A549 (cell line): ENCODE measurements at regions of chr1 and their contacts with region 1.

Region 1: GRCh38 chr1:145858894-145859490 is at the start of gene PIAS3:
- DNase-seq: peak; percentile 92 to 93
- ATAC-seq: peak; percentile 83 to 95
- H3K4me3 ChIP-seq: peak within 1 kb of the TSS; percentile 53
- H3K27ac ChIP-seq: peak within 1 kb of the TSS; percentile 92 to 99
- H3K4me1 ChIP-seq: peaks cover 10% of the 10 kb centered on the region; the same call in 2 of the 3 replicates
- CTCF ChIP-seq: no peak
- EP300 ChIP-seq: peak in 1 of 2 experiments; percentile 7; a peak in 1 of 5 replicates
- POLR2A ChIP-seq: peak; percentile 43
- RAD21 ChIP-seq: no peak
- polyA plus RNA-seq, gene PIAS3: 15.5 and 25.4 TPM in 2 replicates

Region 2: DNA sequence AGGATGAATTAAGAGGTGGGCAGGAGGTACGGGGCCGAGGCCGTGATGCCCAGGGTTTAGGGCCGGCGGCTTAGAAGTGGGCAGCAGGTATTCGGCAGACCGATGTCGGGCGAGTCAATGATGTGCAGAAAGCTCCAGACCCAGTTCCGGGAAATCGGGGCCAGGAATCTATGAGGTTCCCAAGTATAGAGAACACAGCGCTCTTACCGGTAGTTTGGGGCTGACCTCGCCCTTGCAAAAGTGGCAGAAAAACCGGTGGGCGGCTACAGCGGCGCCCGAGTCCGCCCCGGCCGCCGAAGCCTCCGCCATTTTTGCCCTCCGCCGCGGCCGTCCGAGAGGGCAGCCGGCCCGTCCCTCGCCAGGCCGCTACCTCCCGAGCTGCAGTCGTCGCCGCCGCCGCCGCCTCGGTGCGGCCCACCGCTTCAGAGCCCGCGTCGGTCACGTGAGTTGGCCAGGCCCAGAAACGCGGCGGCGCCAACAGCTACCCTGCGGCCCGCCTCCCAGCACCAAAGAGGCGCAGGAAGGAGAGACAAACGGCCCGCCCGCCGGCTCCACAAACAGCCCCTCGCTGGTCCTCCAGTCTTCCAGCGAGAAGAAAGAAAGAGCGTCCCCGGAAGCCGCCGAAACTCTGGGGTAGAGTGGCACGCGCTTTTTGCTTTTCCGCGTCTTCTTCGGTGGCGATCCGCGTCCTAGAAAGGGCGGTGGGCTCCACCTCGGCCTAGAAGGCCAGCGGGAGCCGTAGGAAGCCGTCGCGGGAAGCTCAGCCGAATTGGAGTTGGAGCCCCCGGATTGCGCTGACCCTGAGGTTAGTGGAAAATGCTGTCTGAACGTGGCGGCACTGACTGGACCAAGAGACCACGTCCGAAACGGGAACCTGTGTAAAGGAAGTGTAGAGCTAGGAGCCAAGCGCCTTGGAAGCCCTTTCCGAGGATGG is 35.2 kb before region 1 on chr1 and contains the starts of genes POLR3C and RNF115:
- CTCF ChIA-PET with region 1: no interaction called
- POLR2A ChIA-PET with region 1: interaction called, 12 read pairs
- DNase-seq: peak; percentile 83 to 93
- ATAC-seq: peak; percentile 96 to 97
- H3K4me3 ChIP-seq: peak within 1 kb of the TSS; percentile 75
- H3K27ac ChIP-seq: peak within 1 kb of the TSS; percentile 94 to 97
- H3K4me1 ChIP-seq: peaks cover 11% of the 10 kb centered on the region
- CTCF ChIP-seq: no peak
- EP300 ChIP-seq: no peak
- POLR2A ChIP-seq: peak; percentile 60
- RAD21 ChIP-seq: peak; percentile 5 to 17; a peak in 2 of 5 replicates
- polyA plus RNA-seq, gene POLR3C: 58.3 and 65.0 TPM in 2 replicates
- polyA plus RNA-seq, gene RNF115: 18.4 and 18.8 TPM in 2 replicates

Region 3: GRCh38 chr1:145906954-145907753 is 48.2 kb after region 1 on chr1:
- CTCF ChIA-PET with region 1: interaction called, 52 read pairs
- POLR2A ChIA-PET with region 1: interaction called, 4 read pairs
- DNase-seq: no peak
- ATAC-seq: no peak
- H3K4me3 ChIP-seq: no peak overlapping the region
- H3K27ac ChIP-seq: peak overlapping the region; percentile 39 to 42; a peak in 4 of 6 replicates
- H3K4me1 ChIP-seq: peaks cover 4% of the 10 kb centered on the region; the same call in 1 of the 3 replicates
- CTCF ChIP-seq: no peak
- EP300 ChIP-seq: no peak
- POLR2A ChIP-seq: no peak
- RAD21 ChIP-seq: no peak

Region 4: GRCh38 chr1:145927063-145927886 is 68.3 kb after region 1 on chr1 and contains the start of gene RBM8A:
- CTCF ChIA-PET with region 1: interaction called, 6 read pairs
- POLR2A ChIA-PET with region 1: interaction called, 22 read pairs
- DNase-seq: peak; percentile 86 to 99
- ATAC-seq: peak; percentile 98
- H3K4me3 ChIP-seq: peak within 1 kb of the TSS; percentile 84
- H3K27ac ChIP-seq: peak within 1 kb of the TSS; percentile 97
- H3K4me1 ChIP-seq: peaks cover 10% of the 10 kb centered on the region; the same call in 2 of the 3 replicates
- CTCF ChIP-seq: peak; percentile 60
- EP300 ChIP-seq: no peak
- POLR2A ChIP-seq: peak; percentile 92
- RAD21 ChIP-seq: peak; percentile 15 to 20; a peak in 1 of 5 replicates
- polyA plus RNA-seq, gene RBM8A: 152 and 281 TPM in 2 replicates

Region 5: GRCh38 chr1:145942405-145942804 is 83.4 kb after region 1 on chr1:
- CTCF ChIA-PET with region 1: no interaction called
- POLR2A ChIA-PET with region 1: no interaction called
- DNase-seq: no peak
- ATAC-seq: no peak
- H3K4me3 ChIP-seq: no peak overlapping the region
- H3K27ac ChIP-seq: no peak overlapping the region
- H3K4me1 ChIP-seq: no peaks in the 10 kb centered on the region
- CTCF ChIP-seq: no peak
- EP300 ChIP-seq: no peak
- POLR2A ChIP-seq: no peak
- RAD21 ChIP-seq: no peak

Region 6: GRCh38 chr1:145957443-145958319 is 98.7 kb after region 1 on chr1 and contains the start of gene LIX1L:
- CTCF ChIA-PET with region 1: interaction called, 3 read pairs
- POLR2A ChIA-PET with region 1: interaction called, 15 read pairs
- DNase-seq: peak; percentile 95 to 97
- ATAC-seq: peak; percentile 82 to 89
- H3K4me3 ChIP-seq: peak within 1 kb of the TSS; percentile 68
- H3K27ac ChIP-seq: peak within 1 kb of the TSS; percentile 91 to 97
- H3K4me1 ChIP-seq: peaks cover 42% of the 10 kb centered on the region
- CTCF ChIP-seq: no peak
- EP300 ChIP-seq: no peak
- POLR2A ChIP-seq: peak; percentile 66
- RAD21 ChIP-seq: no peak
- polyA plus RNA-seq, gene LIX1L: 33.0 and 35.8 TPM in 2 replicates

Region 7: DNA sequence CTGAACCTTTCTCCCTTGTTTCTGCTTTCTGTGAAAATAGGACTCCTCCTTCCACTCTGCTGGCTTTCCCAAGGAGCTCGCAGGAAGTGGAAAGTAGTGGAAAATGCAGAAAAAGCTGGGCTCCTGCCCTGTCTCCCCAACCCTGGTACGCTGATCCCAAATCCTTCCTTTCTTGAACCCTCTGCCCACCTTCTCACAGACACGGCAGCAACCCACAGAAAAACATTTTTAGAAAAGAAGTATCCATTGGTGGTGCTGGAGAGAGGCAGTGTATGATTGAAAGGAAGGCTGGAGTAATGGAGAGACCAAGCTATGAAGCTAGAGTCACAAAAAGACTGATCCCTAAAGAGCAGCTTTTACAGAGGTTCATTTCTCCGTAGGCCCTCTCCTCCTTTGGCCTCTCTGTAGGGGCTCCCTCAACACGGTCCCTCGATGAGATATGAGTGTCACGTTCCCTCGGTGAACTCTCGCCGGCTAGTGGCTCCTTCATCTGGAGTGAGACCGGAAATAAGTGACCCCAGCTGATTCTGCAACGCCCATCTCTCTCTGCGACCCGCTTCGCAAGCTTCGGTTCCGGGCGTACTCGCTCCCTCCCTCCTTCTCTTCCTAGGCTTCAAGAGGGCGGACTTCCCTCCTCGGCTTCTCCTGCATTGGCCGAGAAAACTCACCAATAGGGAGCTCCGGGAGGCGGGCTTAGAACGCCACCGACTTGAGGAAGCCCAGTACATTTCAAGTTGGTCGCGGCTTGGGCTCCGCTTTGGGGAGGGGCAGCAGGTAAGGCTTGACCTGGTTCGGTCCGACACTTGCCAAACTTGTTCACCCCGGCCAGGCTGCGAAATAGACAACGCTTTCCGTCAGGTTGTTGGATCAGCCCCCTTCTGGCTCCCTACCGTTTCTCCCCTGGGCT is 105.3 kb after region 1 on chr1 and contains the starts of genes ANKRD34A and POLR3GL:
- CTCF ChIA-PET with region 1: no interaction called
- POLR2A ChIA-PET with region 1: interaction called, 10 read pairs
- DNase-seq: peak; percentile 93 to 95
- ATAC-seq: peak; percentile 84 to 92
- H3K4me3 ChIP-seq: peak within 1 kb of the TSS; percentile 55
- H3K27ac ChIP-seq: peak within 1 kb of the TSS; percentile 78 to 87
- H3K4me1 ChIP-seq: peaks cover 39% of the 10 kb centered on the region
- CTCF ChIP-seq: no peak
- EP300 ChIP-seq: no peak
- POLR2A ChIP-seq: peak; percentile 79
- RAD21 ChIP-seq: no peak
- polyA plus RNA-seq, gene ANKRD34A: 0.30 and 0.34 TPM in 2 replicates
- polyA plus RNA-seq, gene POLR3GL: 11.0 and 15.7 TPM in 2 replicates